Mammary epithelial cell (primary cell): ENCODE measurements at regions of chr17 and their contacts with region 1.

Region 1: DNA sequence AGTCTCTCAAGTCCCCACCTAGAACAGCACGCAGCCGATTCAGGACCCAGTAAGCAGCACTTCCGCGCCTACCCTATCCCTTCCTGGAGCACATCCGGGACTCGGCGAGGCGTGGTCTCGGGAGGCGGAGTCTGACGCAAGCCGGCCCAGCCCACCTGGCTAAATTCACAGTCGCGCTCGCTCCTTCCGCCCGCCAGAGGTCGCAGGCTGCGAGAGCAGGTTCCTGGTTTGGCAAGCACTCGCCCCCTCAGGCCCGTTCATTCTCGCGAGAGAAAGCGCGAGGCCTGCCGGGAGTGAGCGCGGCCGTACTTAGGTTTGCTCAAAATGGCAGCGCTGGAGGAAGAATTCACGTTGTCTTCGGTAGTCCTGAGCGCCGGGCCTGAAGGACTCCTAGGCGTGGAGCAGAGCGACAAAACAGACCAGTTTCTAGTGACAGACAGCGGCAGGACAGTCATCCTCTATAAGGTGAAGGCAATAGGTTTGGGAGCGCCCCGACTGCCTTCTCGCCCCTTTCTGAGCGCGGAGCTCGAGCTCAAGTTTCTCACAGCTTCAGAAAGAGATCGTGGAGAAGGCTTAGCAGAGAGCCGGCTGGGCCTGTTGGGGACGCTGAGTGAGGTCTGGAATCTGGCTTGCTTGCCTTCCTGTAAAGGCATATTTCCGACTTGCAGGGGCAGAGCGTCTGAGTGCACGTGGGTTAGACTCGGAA is at the start of gene NOL11:
- DNase-seq: peak; percentile 97
- H3K4me3 ChIP-seq: peak within 1 kb of the TSS; percentile 81 to 90 (median 81)
- H3K27ac ChIP-seq: peak within 1 kb of the TSS; percentile 85
- H3K4me1 ChIP-seq: peaks cover 16% of the 10 kb centered on the region
- H3K27me3 ChIP-seq: no peaks in the 10 kb centered on the region
- CTCF ChIP-seq: peak; percentile 81 to 98
- total RNA-seq, gene NOL11: 36.5 to 40.6 TPM

Region 2: GRCh38 chr17:67594115-67594880 is 123.5 kb before region 1 on chr17:
- CTCF ChIA-PET with region 1: no interaction called
- dilution Hi-C with region 1: no loop called
- in situ Hi-C with region 1: no loop called
- intact Hi-C with region 1: no loop called
- DNase-seq: no peak
- H3K4me3 ChIP-seq: no peak overlapping the region
- H3K27ac ChIP-seq: no peak overlapping the region
- H3K4me1 ChIP-seq: no peaks in the 10 kb centered on the region
- H3K27me3 ChIP-seq: no peaks in the 10 kb centered on the region
- CTCF ChIP-seq: no peak

Region 3: GRCh38 chr17:67824735-67825626 is 107.2 kb after region 1 on chr17 and contains the start of gene BPTF:
- CTCF ChIA-PET with region 1: no interaction called
- dilution Hi-C with region 1: no loop called
- in situ Hi-C with region 1: no loop called
- intact Hi-C with region 1: loop called (anchors 1 kb)
- DNase-seq: peak; percentile 86
- H3K4me3 ChIP-seq: peak within 1 kb of the TSS; percentile 90
- H3K27ac ChIP-seq: peak within 1 kb of the TSS; percentile 54
- H3K4me1 ChIP-seq: peaks cover 7% of the 10 kb centered on the region
- H3K27me3 ChIP-seq: no peaks in the 10 kb centered on the region
- CTCF ChIP-seq: peak; percentile 71 to 84
- total RNA-seq, gene BPTF: 54.1 to 54.3 TPM